Calu3 (cell line): ENCODE measurements at regions of chr18 and their contacts with region 1.

Region 1: GRCh38 chr18:54558609-54559585 is 32.1 kb upstream of the DYNAP start:
- DNase-seq: peak; percentile 34
- H3K4me3 Mint-ChIP-seq: no peak overlapping the region
- H3K27ac Mint-ChIP-seq: no peak overlapping the region
- H3K4me1 Mint-ChIP-seq: no peaks in the 10 kb centered on the region
- H3K27me3 Mint-ChIP-seq: no peaks in the 10 kb centered on the region
- CTCF ChIP-seq: peak; percentile 68

Region 2: GRCh38 chr18:54515149-54515548 is 43.7 kb before region 1 on chr18:
- CTCF ChIA-PET with region 1: no interaction called
- intact Hi-C with region 1: no loop called
- DNase-seq: no peak
- H3K4me3 Mint-ChIP-seq: no peak overlapping the region
- H3K27ac Mint-ChIP-seq: no peak overlapping the region
- H3K4me1 Mint-ChIP-seq: no peaks in the 10 kb centered on the region
- H3K27me3 Mint-ChIP-seq: no peaks in the 10 kb centered on the region
- CTCF ChIP-seq: no peak

Region 3: DNA sequence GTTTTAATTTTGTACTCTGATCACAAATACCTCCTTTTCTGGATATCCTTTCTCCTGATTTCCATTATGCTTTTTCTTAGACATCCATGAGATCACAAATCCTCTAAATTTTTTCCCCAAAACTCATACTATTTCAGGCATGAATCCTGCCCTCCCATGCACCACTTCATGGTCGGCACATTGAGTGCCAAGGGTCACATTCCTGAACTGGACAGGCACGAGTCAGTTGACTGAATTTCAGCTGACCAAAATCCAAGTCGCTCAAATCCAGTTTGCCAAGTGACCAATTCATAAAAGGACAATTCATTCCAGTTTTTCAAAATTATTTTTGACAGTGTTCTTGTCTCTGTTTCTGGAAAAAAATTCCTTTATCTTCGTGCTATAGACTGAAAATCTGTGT is 54.3 kb after region 1 on chr18:
- CTCF ChIA-PET with region 1: no interaction called
- intact Hi-C with region 1: no loop called
- DNase-seq: no peak
- H3K4me3 Mint-ChIP-seq: no peak overlapping the region
- H3K27ac Mint-ChIP-seq: peak overlapping the region; percentile 28
- H3K4me1 Mint-ChIP-seq: peaks cover 32% of the 10 kb centered on the region
- H3K27me3 Mint-ChIP-seq: peaks cover 14% of the 10 kb centered on the region
- CTCF ChIP-seq: no peak

Region 4: GRCh38 chr18:54647176-54647575 is 88.3 kb after region 1 on chr18:
- CTCF ChIA-PET with region 1: no interaction called
- intact Hi-C with region 1: loop called (anchors 1 kb)
- DNase-seq: peak; percentile 48
- H3K4me3 Mint-ChIP-seq: no peak overlapping the region
- H3K27ac Mint-ChIP-seq: peak overlapping the region; percentile 4
- H3K4me1 Mint-ChIP-seq: no peaks in the 10 kb centered on the region
- H3K27me3 Mint-ChIP-seq: no peaks in the 10 kb centered on the region
- CTCF ChIP-seq: peak; percentile 56

Region 5: GRCh38 chr18:54671291-54671881 is 112.5 kb after region 1 on chr18:
- CTCF ChIA-PET with region 1: interaction called, 3 read pairs
- intact Hi-C with region 1: loop called (anchors 1 kb)
- DNase-seq: peak; percentile 26
- H3K4me3 Mint-ChIP-seq: no peak overlapping the region
- H3K27ac Mint-ChIP-seq: no peak overlapping the region
- H3K4me1 Mint-ChIP-seq: peaks cover 11% of the 10 kb centered on the region
- H3K27me3 Mint-ChIP-seq: no peaks in the 10 kb centered on the region
- CTCF ChIP-seq: peak; percentile 55

Region 6: GRCh38 chr18:54983041-54983686 is 424.3 kb after region 1 on chr18:
- CTCF ChIA-PET with region 1: no interaction called
- intact Hi-C with region 1: loop called (anchors 10 kb)
- DNase-seq: peak; percentile 20
- H3K4me3 Mint-ChIP-seq: no peak overlapping the region
- H3K27ac Mint-ChIP-seq: no peak overlapping the region
- H3K4me1 Mint-ChIP-seq: peaks cover 6% of the 10 kb centered on the region
- H3K27me3 Mint-ChIP-seq: no peaks in the 10 kb centered on the region
- CTCF ChIP-seq: peak; percentile 70